ENCODE measurements at regions of chr20 and their contacts with region 1.

Region 1: GRCh38 chr20:52230409-52230808 is 38.8 kb upstream of the ZFP64 start:
- DNase-seq: no peak
- H3K4me3 ChIP-seq: no peak overlapping the region
- H3K4me3 Mint-ChIP-seq: no peak overlapping the region
- H3K27ac Mint-ChIP-seq: peak overlapping the region; percentile 8
- H3K4me1 ChIP-seq: peaks cover 25% of the 10 kb centered on the region
- H3K4me1 Mint-ChIP-seq: peaks cover 24% of the 10 kb centered on the region
- H3K27me3 ChIP-seq: no peaks in the 10 kb centered on the region
- H3K27me3 Mint-ChIP-seq: no peaks in the 10 kb centered on the region
- CTCF ChIP-seq: no peak

Region 2: GRCh38 chr20:52191132-52191915 is 39.1 kb before region 1 on chr20 and contains the start of gene ZFP64:
- CTCF ChIA-PET with region 1: interaction called, 14 read pairs
- POLR2A ChIA-PET with region 1: no interaction called
- intact Hi-C with region 1: loop called (anchors 2 kb)
- DNase-seq: peak; percentile 90 to 92
- H3K4me3 ChIP-seq: peak within 1 kb of the TSS; percentile 97
- H3K4me3 Mint-ChIP-seq: peak within 1 kb of the TSS; percentile 85
- H3K27ac Mint-ChIP-seq: peak within 1 kb of the TSS; percentile 55
- H3K4me1 ChIP-seq: 0 out of 2 replicates have a peak, but pooled peaks cover 7% of the 10 kb centered on the region
- H3K4me1 Mint-ChIP-seq: peaks cover 21% of the 10 kb centered on the region
- H3K27me3 ChIP-seq: no peaks in the 10 kb centered on the region
- H3K27me3 Mint-ChIP-seq: no peaks in the 10 kb centered on the region
- CTCF ChIP-seq: peak; percentile 82 to 98
- total RNA-seq, gene ZFP64: 25.4 and 25.6 TPM in 2 replicates

Region 3: GRCh38 chr20:52209154-52209571 is 21.2 kb before region 1 on chr20:
- CTCF ChIA-PET with region 1: no interaction called
- POLR2A ChIA-PET with region 1: no interaction called
- intact Hi-C with region 1: no loop called
- DNase-seq: no peak
- H3K4me3 ChIP-seq: no peak overlapping the region
- H3K4me3 Mint-ChIP-seq: no peak overlapping the region
- H3K27ac Mint-ChIP-seq: no peak overlapping the region
- H3K4me1 ChIP-seq: no peaks in the 10 kb centered on the region
- H3K4me1 Mint-ChIP-seq: no peaks in the 10 kb centered on the region
- H3K27me3 ChIP-seq: no peaks in the 10 kb centered on the region
- H3K27me3 Mint-ChIP-seq: peaks cover 12% of the 10 kb centered on the region
- CTCF ChIP-seq: no peak

Region 4: DNA sequence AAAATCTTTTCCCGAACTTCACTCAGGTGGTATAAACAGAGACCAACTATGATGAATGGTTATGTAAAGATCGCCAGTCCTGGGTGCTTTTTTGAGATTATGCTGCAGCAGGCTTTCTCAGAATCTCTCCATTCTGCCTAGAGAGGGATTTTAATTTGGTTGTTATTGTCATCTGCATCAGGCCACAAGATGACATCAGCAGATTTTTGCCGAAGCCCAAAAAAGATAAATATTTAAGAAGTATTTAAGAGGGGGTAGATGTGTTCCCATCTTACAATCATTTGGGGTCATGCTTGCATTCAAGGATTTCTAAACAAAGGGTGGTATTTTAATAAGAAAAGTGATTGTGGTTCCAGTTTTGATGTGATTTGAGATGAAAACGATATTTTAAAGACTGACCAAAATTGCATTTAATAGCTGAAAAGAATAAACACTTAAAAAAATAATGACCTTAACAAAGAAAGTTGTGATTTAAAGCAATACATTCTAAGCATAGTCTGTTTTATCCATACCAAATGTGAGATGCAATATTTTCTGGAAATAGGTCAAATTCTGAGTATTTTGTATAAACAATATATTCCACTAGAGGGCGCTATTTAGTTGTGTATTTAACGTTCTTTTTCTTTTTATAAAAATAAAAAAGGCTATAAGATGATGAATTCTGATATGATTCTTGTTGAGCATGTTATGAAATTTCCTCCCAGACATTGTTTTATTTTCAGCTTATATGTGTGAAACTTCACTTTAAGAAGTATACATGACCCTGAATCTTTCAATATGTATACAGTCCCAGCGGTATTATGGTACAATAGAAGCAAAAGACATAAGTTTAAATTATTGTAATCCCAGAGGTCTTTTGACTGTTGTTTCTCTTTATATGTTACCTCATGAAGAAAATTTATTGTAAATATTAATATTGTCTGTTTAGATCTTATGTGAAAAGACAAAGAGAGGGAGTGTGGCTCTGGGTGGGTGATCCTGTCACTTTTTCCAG is 12.1 kb after region 1 on chr20:
- CTCF ChIA-PET with region 1: interaction called, 4 read pairs
- POLR2A ChIA-PET with region 1: no interaction called
- intact Hi-C with region 1: loop called (anchors 1 kb)
- DNase-seq: no peak
- H3K4me3 ChIP-seq: no peak overlapping the region
- H3K4me3 Mint-ChIP-seq: no peak overlapping the region
- H3K27ac Mint-ChIP-seq: no peak overlapping the region
- H3K4me1 ChIP-seq: no peaks in the 10 kb centered on the region
- H3K4me1 Mint-ChIP-seq: no peaks in the 10 kb centered on the region
- H3K27me3 ChIP-seq: no peaks in the 10 kb centered on the region
- H3K27me3 Mint-ChIP-seq: peaks cover 6% of the 10 kb centered on the region
- CTCF ChIP-seq: peak; percentile 43 to 94